ENCODE measurements at regions of chr6 and their contacts with region 1.

Region 1: DNA sequence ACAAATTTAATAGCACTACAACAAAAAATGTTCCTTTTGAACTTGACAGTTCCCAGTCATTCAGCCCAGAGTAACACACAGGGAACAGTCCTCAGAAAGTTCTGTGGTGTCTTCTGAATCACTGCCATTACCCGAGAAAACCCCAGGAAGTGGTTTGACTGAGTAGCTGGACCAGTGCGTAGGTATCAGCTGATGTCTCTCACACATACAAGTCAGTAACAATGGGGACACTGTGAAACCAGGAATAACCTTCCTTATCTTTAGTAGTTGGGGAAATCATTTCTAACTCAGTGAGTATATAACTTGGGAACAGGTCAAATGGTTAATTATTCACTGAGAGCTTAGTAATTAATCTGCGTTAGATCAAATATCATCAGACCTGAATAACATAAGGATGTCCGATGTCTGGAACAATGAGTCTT is 73.1 kb downstream of the HIVEP2 start:
- DNase-seq: peak; percentile 33
- H3K4me3 Mint-ChIP-seq: peak overlapping the region; percentile 57
- H3K27ac Mint-ChIP-seq: peak overlapping the region; percentile 75
- H3K4me1 Mint-ChIP-seq: peaks cover 71% of the 10 kb centered on the region
- H3K27me3 Mint-ChIP-seq: no peaks in the 10 kb centered on the region

Region 2: DNA sequence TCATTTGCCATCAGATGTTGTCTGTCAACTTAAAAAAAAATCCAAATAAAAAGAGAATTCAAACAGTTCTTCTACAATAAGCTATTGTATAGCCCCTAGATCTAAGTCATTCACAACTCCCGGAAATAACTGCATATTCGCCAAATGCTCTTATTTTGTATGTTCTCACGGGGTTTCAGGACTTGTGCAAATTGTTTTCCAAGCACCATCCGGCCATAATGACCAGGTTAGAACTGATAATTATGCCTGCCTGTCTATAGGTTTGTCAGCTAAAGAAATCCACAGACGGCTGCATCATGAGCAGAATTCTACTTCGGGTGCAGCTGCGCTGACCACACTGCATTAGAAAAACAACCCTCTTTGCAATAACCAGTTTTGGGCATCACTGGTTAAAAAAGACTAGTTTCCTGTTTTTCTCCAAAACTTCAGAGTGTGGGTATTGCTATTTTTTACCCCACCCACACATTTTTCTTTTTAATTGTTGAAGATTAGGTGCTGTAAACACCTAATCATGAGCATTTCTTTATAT is 14.6 kb before region 1 on chr6:
- intact Hi-C with region 1: loop called (anchors 1 kb)
- DNase-seq: no peak
- H3K4me3 Mint-ChIP-seq: peak overlapping the region; percentile 75
- H3K27ac Mint-ChIP-seq: peak overlapping the region; percentile 93
- H3K4me1 Mint-ChIP-seq: peaks cover 79% of the 10 kb centered on the region
- H3K27me3 Mint-ChIP-seq: no peaks in the 10 kb centered on the region

Region 3: GRCh38 chr6:142885182-142885867 is 13.4 kb after region 1 on chr6:
- intact Hi-C with region 1: loop called (anchors 1 kb)
- DNase-seq: peak; percentile 26
- H3K4me3 Mint-ChIP-seq: peak overlapping the region; percentile 92
- H3K27ac Mint-ChIP-seq: peak overlapping the region; percentile 99
- H3K4me1 Mint-ChIP-seq: peaks cover 65% of the 10 kb centered on the region
- H3K27me3 Mint-ChIP-seq: no peaks in the 10 kb centered on the region

Region 4: DNA sequence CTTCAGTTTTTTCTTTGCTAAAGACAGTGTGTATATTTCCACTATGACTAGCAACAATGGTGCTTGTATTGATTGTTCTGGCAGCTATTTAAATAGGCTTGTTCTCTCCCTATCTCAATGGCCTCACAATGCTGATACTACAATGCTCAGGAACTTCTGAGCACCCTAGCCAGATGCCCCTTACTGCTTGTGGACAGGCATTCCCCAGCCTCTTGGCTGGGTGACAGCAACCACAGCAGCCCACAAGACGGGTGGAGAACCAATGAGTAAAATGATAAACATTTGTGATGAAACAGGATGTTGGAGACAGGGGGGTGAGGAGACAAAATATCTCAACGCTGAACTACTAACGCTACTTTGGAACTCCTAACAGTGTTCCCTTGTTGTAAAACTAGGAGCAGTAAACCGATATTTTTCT is 30.7 kb after region 1 on chr6:
- intact Hi-C with region 1: loop called (anchors 1 kb)
- DNase-seq: peak; percentile 64
- H3K4me3 Mint-ChIP-seq: peak overlapping the region; percentile 53
- H3K27ac Mint-ChIP-seq: peak overlapping the region; percentile 84
- H3K4me1 Mint-ChIP-seq: peaks cover 60% of the 10 kb centered on the region
- H3K27me3 Mint-ChIP-seq: no peaks in the 10 kb centered on the region

Region 5: GRCh38 chr6:143060806-143061596 is 189.1 kb after region 1 on chr6 and contains the start of gene AIG1:
- intact Hi-C with region 1: no loop called
- DNase-seq: peak; percentile 52
- H3K4me3 Mint-ChIP-seq: peak within 1 kb of the TSS; percentile 86
- H3K27ac Mint-ChIP-seq: peak within 1 kb of the TSS; percentile 81
- H3K4me1 Mint-ChIP-seq: peaks cover 16% of the 10 kb centered on the region
- H3K27me3 Mint-ChIP-seq: no peaks in the 10 kb centered on the region
- total RNA-seq, gene AIG1: 2.3 and 2.4 TPM in 2 replicates